HEK293 (cell line): ENCODE measurements at regions of chr5 and their contacts with region 1.

Region 1: GRCh38 chr5:81105261-81105877 is 127.8 kb upstream of the CKMT2 start:
- H3K4me3 ChIP-seq: no peak overlapping the region
- H3K27ac ChIP-seq: no peak overlapping the region
- H3K4me1 ChIP-seq: no peaks in the 10 kb centered on the region
- CTCF ChIP-seq: no peak

Region 2: GRCh38 chr5:80711938-80712337 is 393.4 kb before region 1 on chr5:
- CTCF ChIA-PET with region 1: interaction called, 10 read pairs
- POLR2A ChIA-PET with region 1: no interaction called
- H3K4me3 ChIP-seq: no peak overlapping the region
- H3K27ac ChIP-seq: no peak overlapping the region
- H3K4me1 ChIP-seq: no peaks in the 10 kb centered on the region
- CTCF ChIP-seq: peak; percentile 36; the same call in 1 of the 2 replicates

Region 3: DNA sequence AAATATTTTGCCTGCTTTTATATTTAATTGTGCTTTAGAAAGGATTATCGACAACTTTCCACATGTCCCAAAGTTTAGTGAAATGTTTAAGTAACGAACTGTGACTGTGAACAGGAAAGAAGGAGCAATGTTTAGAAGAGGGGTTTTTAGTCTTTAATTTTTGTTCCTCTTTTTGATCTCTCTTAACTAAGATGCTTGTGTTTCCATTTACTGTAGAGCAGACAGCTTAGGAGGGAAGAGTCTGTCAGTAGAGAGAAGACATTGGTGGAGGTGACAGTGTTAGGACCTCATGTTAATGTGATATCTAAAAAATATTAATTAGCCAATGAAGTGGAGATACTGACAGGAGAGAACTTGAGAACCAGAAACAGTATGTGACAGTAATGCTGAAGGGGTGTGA is 53.0 kb before region 1 on chr5:
- CTCF ChIA-PET with region 1: no interaction called
- POLR2A ChIA-PET with region 1: no interaction called
- H3K4me3 ChIP-seq: no peak overlapping the region
- H3K27ac ChIP-seq: no peak overlapping the region
- H3K4me1 ChIP-seq: no peaks in the 10 kb centered on the region
- CTCF ChIP-seq: no peak

Region 4: GRCh38 chr5:81093537-81094196 is 11.7 kb before region 1 on chr5:
- CTCF ChIA-PET with region 1: interaction called, 25 read pairs
- POLR2A ChIA-PET with region 1: no interaction called
- H3K4me3 ChIP-seq: no peak overlapping the region
- H3K27ac ChIP-seq: no peak overlapping the region
- H3K4me1 ChIP-seq: no peaks in the 10 kb centered on the region
- CTCF ChIP-seq: no peak

Region 5: DNA sequence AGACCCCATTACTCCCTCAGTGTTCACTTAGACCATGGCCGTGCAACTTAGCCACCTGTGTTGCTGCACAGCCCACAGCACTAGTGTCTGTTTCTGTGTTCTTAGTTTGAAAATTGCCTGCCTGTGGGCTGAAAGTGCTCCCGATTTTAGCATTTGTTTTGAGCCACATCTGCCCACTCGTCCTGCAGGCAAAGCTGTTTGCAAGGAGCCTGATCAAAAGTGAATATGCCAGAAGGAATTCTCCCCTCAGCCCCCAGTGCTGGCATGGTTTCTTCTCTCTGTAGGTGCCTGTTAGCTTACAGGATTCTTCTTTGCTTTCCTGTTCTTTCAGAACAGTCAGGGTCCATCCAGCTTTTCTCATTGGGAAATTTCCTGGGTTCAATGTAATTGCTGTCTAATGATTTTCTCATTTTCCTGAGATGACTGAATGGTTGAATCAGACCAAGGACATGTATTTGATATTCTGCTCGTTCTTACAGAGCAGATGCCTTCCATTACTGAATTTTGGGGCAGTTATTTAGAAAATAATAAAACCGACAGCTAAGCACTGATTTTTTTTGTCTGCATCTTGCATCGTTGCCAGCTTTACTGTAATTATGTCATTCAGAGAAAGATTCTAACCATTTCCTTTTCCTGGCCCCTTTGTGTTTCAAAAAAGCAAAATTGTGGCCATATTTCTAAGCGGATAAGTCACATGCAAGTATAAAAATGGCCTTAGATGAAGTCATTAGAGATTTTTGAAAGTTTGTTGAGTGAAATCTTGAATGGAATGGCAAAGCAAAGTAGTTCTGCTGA is 16.7 kb after region 1 on chr5:
- CTCF ChIA-PET with region 1: interaction called, 10 read pairs
- POLR2A ChIA-PET with region 1: no interaction called
- H3K4me3 ChIP-seq: no peak overlapping the region
- H3K27ac ChIP-seq: no peak overlapping the region
- H3K4me1 ChIP-seq: no peaks in the 10 kb centered on the region
- CTCF ChIP-seq: no peak

Region 6: GRCh38 chr5:81292130-81292529 is 186.8 kb after region 1 on chr5:
- CTCF ChIA-PET with region 1: no interaction called
- POLR2A ChIA-PET with region 1: no interaction called
- H3K4me3 ChIP-seq: no peak overlapping the region
- H3K27ac ChIP-seq: no peak overlapping the region
- H3K4me1 ChIP-seq: no peaks in the 10 kb centered on the region
- CTCF ChIP-seq: no peak

Region 7: DNA sequence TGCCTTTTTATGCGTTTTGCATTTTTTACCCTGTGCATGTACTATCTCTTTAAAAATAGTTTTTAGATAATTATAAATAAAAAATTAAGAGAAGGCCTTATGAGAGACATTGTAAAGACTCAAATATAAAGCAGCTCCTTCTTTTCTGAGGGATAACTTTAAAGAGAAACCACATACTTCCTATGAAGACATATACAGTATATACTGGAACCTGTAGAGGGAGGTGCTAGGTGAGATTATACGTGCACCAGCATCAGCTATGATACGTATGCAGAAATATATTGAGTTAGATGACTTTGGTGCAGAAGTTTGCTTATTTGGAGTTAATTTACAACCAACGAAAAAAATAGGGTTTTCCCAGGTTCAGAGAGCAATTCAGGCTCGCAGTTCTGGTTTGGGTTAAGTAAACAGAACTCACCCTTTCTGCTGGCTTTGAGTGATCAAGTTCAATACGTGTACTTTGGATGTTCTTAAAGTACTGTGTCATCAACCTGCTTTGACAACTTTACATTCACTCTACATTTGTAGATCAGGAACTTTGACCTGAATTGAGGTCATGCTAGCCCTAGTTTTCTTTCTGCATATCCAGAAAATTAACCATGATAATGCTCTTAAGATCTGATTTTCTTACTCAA is 247.7 kb after region 1 on chr5:
- CTCF ChIA-PET with region 1: no interaction called
- POLR2A ChIA-PET with region 1: no interaction called
- H3K4me3 ChIP-seq: no peak overlapping the region
- H3K27ac ChIP-seq: no peak overlapping the region
- H3K4me1 ChIP-seq: no peaks in the 10 kb centered on the region
- CTCF ChIP-seq: no peak

Region 8: DNA sequence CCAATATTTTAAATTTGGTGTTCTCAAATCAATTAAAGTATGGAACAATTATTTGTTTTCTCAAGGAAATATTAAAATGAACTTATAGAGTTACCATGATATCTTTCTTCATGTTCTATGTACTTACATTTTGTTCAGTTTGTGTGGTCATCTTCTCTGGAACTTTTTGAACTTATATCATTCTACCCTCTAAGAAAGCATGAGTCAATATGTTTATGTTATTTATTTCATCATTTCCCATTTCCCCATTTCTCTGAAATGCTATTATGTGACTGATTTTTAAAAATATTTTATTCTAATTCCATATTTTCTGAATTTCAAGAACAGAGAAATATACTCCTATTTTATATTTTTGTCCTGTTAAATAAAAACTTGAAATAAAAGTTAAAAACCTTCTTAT is 412.1 kb after region 1 on chr5:
- CTCF ChIA-PET with region 1: no interaction called
- POLR2A ChIA-PET with region 1: no interaction called
- H3K4me3 ChIP-seq: no peak overlapping the region
- H3K27ac ChIP-seq: no peak overlapping the region
- H3K4me1 ChIP-seq: no peaks in the 10 kb centered on the region
- CTCF ChIP-seq: no peak